Activated CD4-positive, alpha-beta T cell treated with anti-CD3 and anti-CD28 coated beads, Interleukin-2, amount 10 ng/mL, durations not matched to agents 24 days and 14 days (primary cell): ENCODE measurements at regions of chr15 and their contacts with region 1.

Region 1: GRCh38 chr15:58475573-58476524 is 44.1 kb downstream of the LIPC start:
- DNase-seq: no peak
- H3K4me3 Mint-ChIP-seq: peak overlapping the region; percentile 46
- H3K27ac Mint-ChIP-seq: peak overlapping the region; percentile 92
- H3K4me1 Mint-ChIP-seq: peaks cover 54% of the 10 kb centered on the region
- H3K27me3 Mint-ChIP-seq: no peaks in the 10 kb centered on the region

Region 2: DNA sequence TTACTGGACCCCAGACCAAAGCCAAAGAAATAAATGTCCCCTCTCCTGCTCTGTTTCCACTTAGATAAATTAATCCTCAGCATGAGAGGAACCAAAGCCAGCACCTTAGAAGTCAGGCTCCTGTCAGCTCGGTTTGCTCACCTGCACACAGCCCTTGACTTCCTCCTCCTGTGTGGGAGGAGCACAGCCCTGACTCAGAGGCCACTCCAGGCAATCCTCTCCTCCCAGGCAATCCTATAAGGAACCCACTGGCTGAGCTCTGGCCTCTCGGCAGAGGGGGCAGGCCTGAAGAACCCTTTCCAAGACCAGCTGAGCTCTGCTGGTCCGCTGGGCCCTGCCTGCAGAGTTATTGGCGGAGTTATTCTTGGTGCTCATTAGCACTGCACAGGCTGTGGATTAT is 13.3 kb before region 1 on chr15:
- intact Hi-C with region 1: loop called (anchors 1 kb)
- DNase-seq: no peak
- H3K4me3 Mint-ChIP-seq: no peak overlapping the region
- H3K27ac Mint-ChIP-seq: peak overlapping the region; percentile 10
- H3K4me1 Mint-ChIP-seq: peaks cover 71% of the 10 kb centered on the region
- H3K27me3 Mint-ChIP-seq: no peaks in the 10 kb centered on the region

Region 3: DNA sequence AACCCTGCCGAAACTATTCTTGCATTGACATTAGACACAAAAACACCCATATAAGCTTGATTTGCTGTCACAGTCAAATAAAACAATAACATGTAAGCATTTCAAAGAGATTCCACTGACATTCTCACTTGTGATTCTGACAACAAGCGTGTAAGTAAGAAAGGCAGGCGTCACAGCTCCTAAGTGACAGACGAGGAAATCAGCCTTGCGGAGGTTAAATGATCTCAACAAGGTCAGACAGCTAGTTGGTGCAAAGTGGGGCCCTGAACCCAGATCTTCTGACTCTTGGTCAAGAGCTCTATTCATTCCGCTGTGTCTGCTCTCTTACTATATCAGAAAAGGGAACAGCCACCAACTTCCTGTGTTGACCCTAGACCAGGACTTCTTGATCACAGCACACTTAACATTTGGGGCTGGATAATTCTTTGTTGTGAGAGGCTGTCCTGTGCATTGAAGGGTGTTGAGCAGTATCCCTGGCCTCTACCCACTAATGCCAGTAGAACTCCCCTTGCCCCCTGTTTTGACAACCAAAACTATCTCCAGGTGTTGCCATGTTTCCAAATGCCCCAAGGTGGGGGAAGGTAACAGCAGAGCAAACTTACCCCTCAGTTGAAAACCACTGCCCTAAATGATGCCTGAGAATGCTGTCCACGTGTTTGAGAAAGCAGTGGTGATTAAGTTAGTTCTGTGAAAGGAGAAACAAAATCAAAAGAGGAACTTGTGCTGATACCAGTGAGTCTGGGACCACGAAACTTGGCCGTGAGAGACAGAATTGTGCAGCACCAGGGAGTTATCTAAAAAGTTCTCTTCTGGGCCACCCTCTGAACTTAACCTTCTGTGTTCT is 42.1 kb after region 1 on chr15:
- intact Hi-C with region 1: loop called (anchors 1 kb)
- DNase-seq: peak; percentile 77
- H3K4me3 Mint-ChIP-seq: peak overlapping the region; percentile 37
- H3K27ac Mint-ChIP-seq: peak overlapping the region; percentile 86
- H3K4me1 Mint-ChIP-seq: peaks cover 70% of the 10 kb centered on the region
- H3K27me3 Mint-ChIP-seq: no peaks in the 10 kb centered on the region